ENCODE measurements at regions of chr17 and their contacts with region 1.

Region 1: DNA sequence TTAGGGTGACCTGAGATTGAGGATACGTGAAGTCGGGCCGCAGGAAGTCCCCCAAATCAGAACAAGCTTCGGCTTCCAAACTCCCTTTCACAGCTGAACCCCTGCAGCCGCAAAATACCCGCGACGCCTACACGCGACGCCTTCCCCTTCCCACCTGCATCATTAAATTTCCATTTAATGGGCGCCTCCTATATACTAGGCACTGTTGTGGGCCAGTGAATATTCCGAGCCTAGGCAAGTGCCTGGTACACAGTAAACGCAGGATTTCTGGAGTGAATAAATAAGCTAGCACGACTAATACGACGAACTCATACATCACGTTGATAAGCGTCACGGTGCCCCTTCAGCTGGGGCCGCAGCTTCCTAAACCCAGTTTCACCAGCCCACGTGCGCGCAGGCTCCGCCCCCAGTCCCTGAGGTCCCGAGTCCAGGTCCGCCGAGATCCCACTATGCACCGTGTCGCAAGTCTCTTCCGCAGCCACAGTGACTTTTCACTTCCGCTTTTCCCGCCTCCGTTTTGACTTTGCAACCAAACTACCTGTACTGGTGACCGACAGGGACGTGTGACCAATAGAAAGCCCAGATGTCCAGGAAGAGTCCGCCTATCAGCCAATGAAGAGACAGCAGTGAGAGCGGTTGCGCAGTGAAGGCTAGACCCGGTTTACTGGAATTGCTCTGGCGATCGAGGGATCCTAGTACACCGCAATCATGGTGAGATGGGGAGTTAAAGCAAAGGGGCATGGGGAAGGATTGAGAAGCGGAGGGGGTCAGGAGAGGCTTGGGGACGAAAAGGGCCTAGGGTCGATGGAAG is at the start of gene PSMB3:
- DNase-seq: peak; percentile 76 to 98 (median 96)
- ATAC-seq: peak; percentile 90
- H3K4me3 ChIP-seq: peak within 1 kb of the TSS; percentile 95
- H3K4me3 Mint-ChIP-seq: peak within 1 kb of the TSS; percentile 89 to 100 (median 98)
- H3K27ac ChIP-seq: peak within 1 kb of the TSS; percentile 83
- H3K27ac Mint-ChIP-seq: peak within 1 kb of the TSS; percentile 91 to 99 (median 97)
- H3K4me1 ChIP-seq: peaks cover 31 to 48% of the 10 kb centered on the region in 2 donors
- H3K4me1 Mint-ChIP-seq: peaks cover 37 to 56% (median 44%) of the 10 kb centered on the region in 7 donors
- H3K27me3 ChIP-seq: peaks cover 6 to 9% of the 10 kb centered on the region in 2 donors
- H3K27me3 Mint-ChIP-seq: peaks cover 12 to 32% (median 20%) of the 10 kb centered on the region in 5 donors
- total RNA-seq, gene PSMB3: 60.8 to 287 (median 92.1) TPM

Region 2: DNA sequence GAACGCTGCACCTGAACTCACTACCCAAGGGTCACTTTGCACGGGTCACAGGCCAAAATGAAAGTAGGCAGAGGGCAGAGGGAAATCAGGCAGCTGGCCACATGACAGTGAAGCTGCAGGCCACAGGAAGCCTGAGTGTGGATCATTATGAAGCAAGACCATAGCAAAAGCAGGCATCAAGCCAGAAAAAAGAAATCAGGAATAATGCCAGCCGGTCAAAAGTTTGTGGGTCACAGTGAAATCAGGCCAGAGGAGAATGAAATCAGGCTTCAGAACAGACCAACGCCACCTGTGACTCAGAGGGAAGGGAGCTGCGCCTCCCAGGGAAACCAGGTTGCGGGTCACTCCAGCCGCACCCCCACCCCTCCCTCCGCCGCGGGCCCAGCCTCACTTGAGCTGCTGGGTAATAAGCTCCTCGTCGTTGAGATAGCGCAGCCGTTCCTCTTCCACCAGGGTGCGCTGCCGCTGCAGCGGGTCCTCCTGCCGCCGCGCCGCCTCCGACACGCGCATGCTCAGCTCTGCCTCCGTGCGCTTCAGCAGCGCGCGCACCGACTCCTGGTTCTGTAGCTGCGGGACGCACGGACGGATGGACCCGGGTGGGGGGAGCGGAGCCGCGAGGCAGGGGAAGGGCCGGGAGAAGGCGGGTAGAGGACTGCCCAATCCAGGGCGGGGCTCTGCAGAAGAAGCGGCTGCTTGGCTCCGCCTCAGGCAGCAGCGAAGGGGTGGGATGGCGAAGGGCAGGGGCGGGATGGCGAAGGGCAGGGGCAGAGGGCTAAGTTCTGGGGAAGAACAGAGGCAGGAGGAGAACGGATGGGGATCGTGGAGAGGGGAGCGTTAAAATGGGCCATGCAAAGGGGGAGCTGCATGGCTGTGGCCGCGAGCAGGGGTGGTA is 194.2 kb before region 1 on chr17:
- CTCF ChIA-PET with region 1: no interaction called
- POLR2A ChIA-PET with region 1: interaction called, 7 read pairs
- intact Hi-C with region 1: loop called (anchors 1 to 2 kb)
- DNase-seq: peak; percentile 75 to 89 (median 85)
- ATAC-seq: peak; percentile 87
- H3K4me3 ChIP-seq: peak overlapping the region; percentile 81
- H3K4me3 Mint-ChIP-seq: peak overlapping the region; percentile 87 to 100 (median 96)
- H3K27ac ChIP-seq: no peak overlapping the region
- H3K27ac Mint-ChIP-seq: peak overlapping the region in 8 of 9 donors; percentile 34 to 87 (median 70)
- H3K4me1 ChIP-seq: peaks cover 0 to 23% of the 10 kb centered on the region in 2 donors
- H3K4me1 Mint-ChIP-seq: peaks cover 16 to 31% (median 25%) of the 10 kb centered on the region in 7 donors
- H3K27me3 ChIP-seq: peaks cover 10 to 20% of the 10 kb centered on the region in 2 donors
- H3K27me3 Mint-ChIP-seq: peaks cover 12 to 66% (median 18%) of the 10 kb centered on the region in 5 donors

Region 3: GRCh38 chr17:38702166-38702899 is 50.0 kb before region 1 on chr17:
- CTCF ChIA-PET with region 1: no interaction called
- POLR2A ChIA-PET with region 1: interaction called, 9 read pairs
- intact Hi-C with region 1: loop called (anchors 1 kb)
- DNase-seq: peak; percentile 69 to 81 (median 75)
- ATAC-seq: peak; percentile 60
- H3K4me3 ChIP-seq: peak overlapping the region; percentile 70
- H3K4me3 Mint-ChIP-seq: peak overlapping the region; percentile 93 to 100 (median 97)
- H3K27ac ChIP-seq: peak overlapping the region; percentile 97
- H3K27ac Mint-ChIP-seq: peak overlapping the region; percentile 91 to 100 (median 98)
- H3K4me1 ChIP-seq: peaks cover 17 to 18% of the 10 kb centered on the region in 2 donors
- H3K4me1 Mint-ChIP-seq: peaks cover 26 to 56% (median 33%) of the 10 kb centered on the region in 7 donors
- H3K27me3 ChIP-seq: no peaks in the 10 kb centered on the region
- H3K27me3 Mint-ChIP-seq: no peaks in the 10 kb centered on the region

Region 4: DNA sequence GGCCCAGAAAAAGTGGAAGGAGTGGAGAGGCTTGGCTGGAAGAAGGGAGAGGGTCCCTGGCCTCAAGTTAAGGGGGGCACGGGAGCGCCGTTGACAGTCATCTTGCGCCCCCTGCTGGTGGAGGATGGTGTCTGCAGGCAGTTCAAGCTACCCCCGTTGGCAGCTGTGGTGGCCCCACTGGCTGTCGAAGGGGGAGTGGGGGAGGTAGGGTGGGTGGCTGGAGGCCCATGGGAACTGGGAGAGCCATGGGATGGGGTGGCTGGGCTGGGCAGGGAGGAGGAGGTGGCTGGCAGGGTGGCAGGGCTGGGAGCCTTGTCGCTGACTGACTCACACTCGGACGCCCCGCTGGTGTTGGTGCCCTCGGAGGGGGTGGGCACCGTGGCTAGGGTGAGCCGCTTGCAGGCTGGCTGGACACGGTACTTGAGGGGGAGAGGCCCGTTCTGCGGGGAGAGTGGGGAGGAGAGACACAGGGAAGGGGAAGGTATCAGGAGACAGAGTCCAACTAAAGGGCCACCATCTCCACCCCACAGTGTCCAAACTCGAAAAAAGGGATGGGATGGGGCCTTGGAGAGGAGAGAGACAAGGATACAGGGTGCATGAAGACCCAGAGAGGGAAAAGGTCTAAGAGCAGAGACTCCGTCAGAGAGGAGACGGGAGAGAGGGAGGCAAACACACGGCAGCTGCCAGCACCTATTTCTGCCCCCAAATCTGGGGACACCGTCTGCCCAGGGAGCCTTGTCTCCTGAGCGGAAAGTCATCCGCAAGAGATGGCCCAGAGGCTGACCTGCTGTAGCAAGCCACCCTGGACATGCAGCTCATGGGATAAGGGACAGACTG is 16.9 kb before region 1 on chr17:
- CTCF ChIA-PET with region 1: interaction called, 6 read pairs
- POLR2A ChIA-PET with region 1: interaction called, 6 read pairs
- intact Hi-C with region 1: loop called (anchors 1 kb)
- DNase-seq: peak; percentile 42 to 80 (median 63)
- ATAC-seq: peak; percentile 55
- H3K4me3 ChIP-seq: no peak overlapping the region
- H3K4me3 Mint-ChIP-seq: no peak overlapping the region
- H3K27ac ChIP-seq: no peak overlapping the region
- H3K27ac Mint-ChIP-seq: peak overlapping the region in 3 of 9 donors; percentile 10 to 38 (median 30)
- H3K4me1 ChIP-seq: peaks cover 15 to 16% of the 10 kb centered on the region in 2 donors
- H3K4me1 Mint-ChIP-seq: peaks cover 23 to 50% (median 45%) of the 10 kb centered on the region in 7 donors
- H3K27me3 ChIP-seq: no peaks in the 10 kb centered on the region
- H3K27me3 Mint-ChIP-seq: peaks cover 0 to 6% (median 0%) of the 10 kb centered on the region in 5 donors

Region 5: DNA sequence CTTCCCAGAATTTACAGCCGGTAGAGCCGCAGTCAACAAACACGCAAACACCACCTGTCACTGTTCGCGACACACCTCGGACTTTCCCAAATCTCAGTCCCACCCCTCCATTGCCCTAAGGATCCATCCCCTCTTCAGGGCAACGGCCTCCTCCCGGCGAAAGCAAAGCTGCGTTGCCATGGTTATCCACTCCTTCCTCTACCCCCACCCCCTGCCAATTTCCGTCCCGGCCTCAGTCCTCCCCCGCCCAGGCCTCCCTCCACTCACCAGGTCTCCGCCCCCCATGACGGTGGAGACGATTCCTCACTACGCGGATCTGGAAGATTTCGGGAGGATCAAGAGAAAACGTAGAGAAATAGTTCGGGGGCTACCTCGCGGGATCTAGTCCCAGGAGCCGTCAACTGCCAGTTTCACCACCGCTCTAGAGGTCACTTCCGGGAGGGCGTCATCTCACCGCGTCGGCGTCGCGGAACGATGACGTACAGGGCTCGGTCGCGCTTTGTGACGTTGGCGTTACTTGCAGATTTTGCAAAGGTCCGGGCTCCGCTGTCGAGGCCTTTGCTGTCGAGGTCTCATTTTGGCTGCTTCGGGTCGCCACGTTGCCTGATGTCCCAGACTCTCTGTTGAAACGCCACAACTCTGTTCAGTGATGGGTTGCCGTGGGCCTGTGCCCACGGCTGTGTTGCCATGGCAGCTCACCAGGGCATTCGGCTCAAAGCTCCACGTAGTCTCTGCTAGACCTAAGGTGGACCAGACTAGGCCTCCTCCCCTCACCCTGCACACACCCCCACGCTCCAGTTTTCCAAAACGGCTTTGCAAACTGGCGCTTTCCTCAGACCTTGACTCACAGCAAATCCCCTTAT is 72.8 kb after region 1 on chr17 and contains the start of gene CWC25:
- CTCF ChIA-PET with region 1: no interaction called
- POLR2A ChIA-PET with region 1: interaction called, 5 read pairs
- intact Hi-C with region 1: loop called (anchors 1 kb)
- DNase-seq: peak; percentile 91 to 100 (median 97)
- ATAC-seq: peak; percentile 92
- H3K4me3 ChIP-seq: peak within 1 kb of the TSS; percentile 77
- H3K4me3 Mint-ChIP-seq: peak within 1 kb of the TSS; percentile 92 to 100 (median 99)
- H3K27ac ChIP-seq: peak within 1 kb of the TSS; percentile 92
- H3K27ac Mint-ChIP-seq: peak within 1 kb of the TSS; percentile 97 to 100 (median 100)
- H3K4me1 ChIP-seq: peaks cover 18 to 21% of the 10 kb centered on the region in 2 donors
- H3K4me1 Mint-ChIP-seq: peaks cover 13 to 42% (median 34%) of the 10 kb centered on the region in 7 donors
- H3K27me3 ChIP-seq: no peaks in the 10 kb centered on the region
- H3K27me3 Mint-ChIP-seq: peaks cover 0 to 5% (median 0%) of the 10 kb centered on the region in 5 donors
- total RNA-seq, gene CWC25: 33.0 to 69.5 (median 53.4) TPM

Region 6: DNA sequence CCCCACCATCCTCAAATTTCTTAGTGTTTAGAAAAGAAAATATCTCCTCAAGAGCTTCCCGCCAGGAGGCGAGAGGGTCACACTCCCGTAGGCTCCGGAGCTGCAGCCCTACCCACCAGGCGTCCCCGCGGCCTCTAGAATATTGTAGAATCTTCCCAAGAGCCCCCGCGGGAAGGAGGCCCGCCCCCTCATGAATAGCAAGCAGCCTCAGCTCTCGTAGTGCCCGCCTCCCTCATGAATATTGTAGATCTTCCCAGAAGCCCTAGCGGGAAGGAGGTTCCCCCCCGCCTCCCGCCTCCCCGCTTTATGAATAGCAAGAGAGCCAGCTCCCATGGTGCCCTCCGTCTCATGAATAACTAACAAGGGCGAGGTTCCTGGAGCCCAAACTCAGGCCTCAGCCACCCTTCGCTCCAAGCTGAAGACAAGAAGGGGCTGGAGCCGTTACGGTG is 215.0 kb after region 1 on chr17 and contains the start of gene FBXO47:
- CTCF ChIA-PET with region 1: no interaction called
- POLR2A ChIA-PET with region 1: no interaction called
- intact Hi-C with region 1: loop called in 1 of 2 experiments (anchors 1 kb)
- DNase-seq: peak; percentile 38 to 86 (median 77)
- ATAC-seq: peak; percentile 99
- H3K4me3 ChIP-seq: peak within 1 kb of the TSS; percentile 43
- H3K4me3 Mint-ChIP-seq: peak within 1 kb of the TSS; percentile 55 to 84 (median 81)
- H3K27ac ChIP-seq: peak within 1 kb of the TSS; percentile 59
- H3K27ac Mint-ChIP-seq: peak within 1 kb of the TSS; percentile 31 to 96 (median 69)
- H3K4me1 ChIP-seq: peaks cover 0 to 16% of the 10 kb centered on the region in 2 donors
- H3K4me1 Mint-ChIP-seq: peaks cover 11 to 28% (median 15%) of the 10 kb centered on the region in 7 donors
- H3K27me3 ChIP-seq: no peaks in the 10 kb centered on the region
- H3K27me3 Mint-ChIP-seq: peaks cover 0 to 2% (median 0%) of the 10 kb centered on the region in 5 donors
- total RNA-seq, gene FBXO47: not detected

Region 7: DNA sequence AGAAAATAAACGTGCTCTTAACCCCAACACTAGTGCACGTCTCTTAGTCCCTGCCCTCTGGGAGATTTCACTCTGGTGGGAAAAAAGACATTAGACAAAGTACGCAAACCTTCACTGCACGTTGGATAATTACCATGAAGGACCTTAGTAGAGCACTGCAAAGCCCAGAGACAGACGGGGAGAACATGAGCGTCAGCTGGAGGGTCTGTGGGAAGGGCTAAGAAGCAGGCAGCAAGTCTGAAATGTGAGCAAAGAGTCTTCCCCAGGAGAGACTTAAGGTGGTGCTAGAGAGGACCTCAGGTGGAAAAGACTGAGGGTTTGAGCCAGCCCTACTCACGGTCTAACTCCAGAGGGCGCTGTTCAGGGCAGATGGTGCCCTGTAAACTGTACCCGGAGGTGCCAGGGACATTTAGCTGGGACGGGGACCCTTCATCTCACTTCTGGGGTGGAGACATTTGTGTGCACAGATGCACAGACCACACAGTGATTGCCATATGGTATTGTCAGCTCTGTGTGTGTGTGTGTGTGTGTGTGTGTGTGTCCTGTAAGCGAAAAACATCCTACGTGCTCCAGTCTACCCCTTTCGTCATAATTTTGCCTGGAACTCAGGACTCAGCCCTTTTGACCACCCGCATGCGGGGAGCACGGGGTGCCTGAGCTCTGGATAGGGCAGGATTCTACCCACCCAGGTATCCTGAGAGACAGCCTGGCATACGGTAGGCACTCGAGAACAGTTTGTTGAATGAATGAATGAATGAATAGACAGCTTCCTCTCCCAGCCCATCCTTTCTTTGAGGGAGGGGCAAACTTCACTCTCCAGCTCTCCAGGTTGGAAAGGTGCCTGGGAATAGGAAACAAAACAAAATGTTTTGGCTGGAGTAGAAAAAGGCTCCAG is 483.5 kb after region 1 on chr17:
- CTCF ChIA-PET with region 1: no interaction called
- POLR2A ChIA-PET with region 1: interaction called, 4 read pairs
- intact Hi-C with region 1: loop called in 1 of 2 experiments (anchors 10 kb)
- DNase-seq: peak in 7 of 9 donors; percentile 35 to 62 (median 51)
- ATAC-seq: peak; percentile 57
- H3K4me3 ChIP-seq: no peak overlapping the region
- H3K4me3 Mint-ChIP-seq: peak overlapping the region in 4 of 10 donors; percentile 0 to 51 (median 8)
- H3K27ac ChIP-seq: no peak overlapping the region
- H3K27ac Mint-ChIP-seq: peak overlapping the region in 8 of 9 donors; percentile 21 to 89 (median 76)
- H3K4me1 ChIP-seq: peaks cover 33 to 43% of the 10 kb centered on the region in 2 donors
- H3K4me1 Mint-ChIP-seq: peaks cover 20 to 45% (median 40%) of the 10 kb centered on the region in 7 donors
- H3K27me3 ChIP-seq: no peaks in the 10 kb centered on the region
- H3K27me3 Mint-ChIP-seq: peaks cover 0 to 13% (median 9%) of the 10 kb centered on the region in 5 donors

Measured in naive thymus-derived CD4-positive, alpha-beta T cell (primary cell).